ENCODE measurements at regions of chr2 and their contacts with region 1.

Region 1: DNA sequence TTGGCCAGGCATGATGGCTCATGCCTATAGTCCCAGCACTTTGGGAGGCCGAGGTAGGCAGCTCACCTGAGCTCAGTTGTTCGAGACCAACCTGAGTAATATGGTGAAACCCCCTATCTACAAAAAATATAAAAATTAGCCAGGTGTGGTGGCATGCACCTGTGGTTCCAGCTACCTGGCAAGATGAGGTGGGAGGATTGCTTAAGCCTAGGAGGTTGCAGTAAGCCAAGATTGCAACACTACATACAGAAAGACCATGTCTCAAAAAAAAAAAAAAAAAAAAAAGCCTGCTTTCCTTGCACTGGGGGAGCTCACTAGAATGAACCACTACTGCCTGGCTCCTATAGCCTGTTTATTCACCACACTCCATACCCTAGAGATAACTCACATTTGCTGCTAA is 7.4 kb upstream of the MAT2A start:
- DNase-seq: peak; percentile 28
- H3K4me3 ChIP-seq: no peak overlapping the region
- H3K27ac ChIP-seq: no peak overlapping the region
- H3K4me1 ChIP-seq: peaks cover 4% of the 10 kb centered on the region
- H3K27me3 ChIP-seq: no peaks in the 10 kb centered on the region
- CTCF ChIP-seq: no peak

Region 2: DNA sequence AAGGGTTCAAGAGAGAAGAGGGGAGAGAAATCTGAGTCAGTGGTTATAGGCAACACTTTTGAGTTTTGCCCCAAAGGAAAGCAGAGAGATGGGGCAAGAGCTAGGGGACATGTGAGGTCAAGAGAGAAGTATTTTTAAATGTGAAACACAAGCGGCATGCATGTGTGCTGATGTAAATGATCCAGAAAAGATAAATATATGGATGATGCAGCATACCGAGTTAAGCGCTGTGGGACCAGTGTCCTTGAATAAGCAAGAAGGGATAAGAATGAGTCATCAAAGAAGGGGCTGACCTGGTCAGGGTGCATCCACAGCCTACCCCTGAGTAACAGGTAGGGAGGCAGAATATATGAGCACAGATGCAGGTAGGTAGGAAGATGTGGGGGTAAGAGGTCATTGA is 831.6 kb before region 1 on chr2:
- CTCF ChIA-PET with region 1: interaction called, 43 read pairs
- dilution Hi-C with region 1: no loop called
- in situ Hi-C with region 1: no loop called
- intact Hi-C with region 1: no loop called
- DNase-seq: no peak
- H3K4me3 ChIP-seq: no peak overlapping the region
- H3K27ac ChIP-seq: no peak overlapping the region
- H3K4me1 ChIP-seq: peaks cover 6% of the 10 kb centered on the region
- H3K27me3 ChIP-seq: peaks cover 3% of the 10 kb centered on the region
- CTCF ChIP-seq: no peak

Region 3: DNA sequence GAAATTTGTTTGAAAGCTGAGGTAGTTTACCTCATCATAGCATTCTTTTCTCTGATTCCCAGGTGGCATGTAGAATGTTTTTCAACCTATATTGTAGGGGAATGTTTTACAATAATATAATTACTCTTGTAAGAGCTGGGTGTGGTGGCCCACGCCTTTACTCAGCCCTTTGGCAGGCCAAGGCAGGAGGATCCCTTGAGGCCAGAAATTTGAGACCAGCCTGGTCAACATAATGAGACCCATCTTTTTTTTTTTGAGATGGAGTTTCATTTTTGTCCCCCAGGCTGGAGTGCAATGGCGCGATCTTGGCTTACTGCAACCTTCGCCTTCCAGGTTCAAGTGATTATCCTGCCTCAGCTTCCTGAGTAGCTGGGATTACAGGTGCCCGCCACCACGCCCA is 88.0 kb after region 1 on chr2:
- CTCF ChIA-PET with region 1: no interaction called
- dilution Hi-C with region 1: no loop called
- in situ Hi-C with region 1: no loop called
- intact Hi-C with region 1: no loop called
- DNase-seq: no peak
- H3K4me3 ChIP-seq: no peak overlapping the region
- H3K27ac ChIP-seq: no peak overlapping the region
- H3K4me1 ChIP-seq: peaks cover 10% of the 10 kb centered on the region
- H3K27me3 ChIP-seq: no peaks in the 10 kb centered on the region
- CTCF ChIP-seq: no peak